Right ventricle myocardium inferior (tissue), 1 donor: ENCODE measurements at regions of chr7 and their contacts with region 1.

Region 1: GRCh38 chr7:143416565-143417149 is 8.0 kb upstream of the EPHA1 start:
- DNase-seq: no peak
- ATAC-seq: no peak

Region 2: DNA sequence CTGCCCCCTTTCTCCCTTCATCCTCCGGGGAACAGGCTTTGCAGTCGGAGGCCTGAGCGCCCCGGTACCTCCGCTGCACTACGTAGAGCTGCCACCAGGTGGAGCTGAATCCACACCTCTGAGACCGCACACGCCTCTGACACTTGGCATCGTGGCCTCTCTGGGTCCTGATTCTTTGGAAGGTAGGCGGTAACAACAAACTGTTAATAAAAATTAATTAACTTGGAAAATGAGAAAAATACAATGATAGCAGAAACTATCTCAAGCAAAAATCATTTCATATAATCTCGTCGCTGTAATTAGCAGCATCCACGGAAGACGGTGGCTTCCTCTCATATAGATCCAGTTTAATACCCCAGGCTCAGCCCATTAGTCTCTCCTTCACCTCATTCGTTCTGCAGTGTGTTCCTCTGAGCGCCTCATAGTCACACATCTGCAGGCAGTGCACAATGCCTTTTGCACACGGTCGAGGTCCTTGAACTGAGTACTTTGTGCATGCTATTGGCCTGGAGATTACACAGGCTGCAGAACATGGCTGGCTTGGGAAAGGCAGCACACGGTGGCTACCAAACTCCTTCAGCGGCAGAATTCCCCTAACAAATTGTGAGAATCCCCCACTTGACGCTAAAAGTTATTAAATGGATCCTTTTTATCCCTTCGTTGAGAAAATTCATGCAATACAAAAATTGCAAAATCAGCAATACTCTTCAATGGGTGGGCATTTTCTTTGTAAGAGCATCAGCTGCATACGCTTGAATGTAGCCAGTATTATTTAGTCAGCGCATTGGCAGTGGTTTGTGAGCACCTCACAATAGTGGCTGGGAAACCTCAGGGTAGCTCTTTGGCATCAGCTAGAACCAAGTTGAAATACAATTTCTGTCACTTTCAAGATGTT is 408.4 kb before region 1 on chr7:
- intact Hi-C with region 1: loop called (anchors 5 kb)
- DNase-seq: peak; percentile 91
- ATAC-seq: peak; percentile 91

Region 3: DNA sequence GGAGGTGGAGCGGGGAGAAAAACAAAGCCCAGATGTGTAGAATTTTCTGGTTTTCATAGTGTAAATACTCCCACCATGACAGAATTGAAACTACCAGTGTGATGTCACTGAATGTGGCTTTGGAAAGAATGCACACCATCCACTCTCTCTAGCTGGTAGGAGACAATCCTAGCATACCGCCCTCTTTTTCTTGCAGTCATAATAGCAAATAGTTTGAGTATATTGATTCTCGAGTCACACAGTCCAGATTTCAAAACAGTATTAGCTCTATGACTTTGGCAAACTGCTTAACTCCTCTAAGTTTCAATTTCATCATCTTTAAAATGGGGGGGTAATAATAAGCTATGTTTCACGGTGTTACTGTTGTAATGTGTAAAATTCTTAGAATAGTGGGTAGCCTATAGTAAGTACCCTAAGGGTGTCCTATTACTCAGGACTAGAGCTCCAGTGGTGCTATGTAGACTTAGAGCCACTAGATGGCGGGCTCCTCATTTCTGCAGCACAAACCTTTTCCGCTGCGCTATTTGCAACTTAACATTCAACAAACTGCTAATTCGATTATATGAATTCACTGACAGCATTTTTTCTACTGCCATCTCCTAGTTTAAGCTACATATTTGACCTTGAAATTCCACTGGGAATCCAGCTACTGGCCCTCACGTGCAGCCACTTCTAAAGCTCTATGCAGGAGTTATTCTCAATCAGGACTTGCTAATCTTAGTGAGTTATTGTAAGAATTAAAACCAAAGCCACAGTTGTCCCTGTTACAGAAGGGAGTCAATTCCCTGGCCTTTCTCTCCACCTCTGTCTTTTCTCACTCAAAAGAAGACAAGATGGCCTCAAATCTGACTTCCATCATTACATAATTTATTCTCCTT is 176.1 kb before region 1 on chr7:
- intact Hi-C with region 1: loop called (anchors 2 kb)
- DNase-seq: peak; percentile 63
- ATAC-seq: peak; percentile 91

Region 4: GRCh38 chr7:143305423-143306070 is 111.1 kb before region 1 on chr7:
- intact Hi-C with region 1: loop called (anchors 5 kb)
- DNase-seq: peak; percentile 82
- ATAC-seq: peak; percentile 82

Region 5: DNA sequence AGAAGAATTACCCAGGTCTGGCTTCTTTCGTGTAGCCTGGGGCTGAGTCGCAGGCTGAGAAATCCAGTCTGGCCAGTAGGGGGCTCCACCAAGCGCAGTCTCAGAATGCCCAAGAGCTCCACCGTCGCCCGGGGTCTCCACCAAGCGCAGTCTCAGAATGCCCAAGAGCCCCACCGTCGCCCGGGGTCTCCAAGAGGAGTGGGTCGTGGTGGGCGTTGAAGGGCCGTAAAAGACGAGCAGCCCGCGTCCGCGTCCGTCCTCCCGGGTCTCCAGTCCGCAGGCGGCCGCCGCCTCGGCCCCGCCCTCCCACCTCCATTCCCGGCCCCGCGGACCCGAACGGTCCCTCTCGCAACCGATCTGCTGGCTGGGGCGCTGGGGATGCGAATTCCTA is 36.4 kb before region 1 on chr7:
- intact Hi-C with region 1: loop called (anchors 1 kb)
- DNase-seq: peak; percentile 93
- ATAC-seq: peak; percentile 82